Activated CD4-positive, alpha-beta memory T cell treated with anti-CD3 and anti-CD28 coated beads, Interleukin-2, amount 10 ng/mL, durations not matched to agents 7 days and 5 days (primary cell): ENCODE measurements at regions of chr9 and their contacts with region 1.

Region 1: GRCh38 chr9:111691672-111692329 is 30.4 kb downstream of the GNG10 start:
- DNase-seq: no peak
- H3K4me3 Mint-ChIP-seq: no peak overlapping the region
- H3K27ac Mint-ChIP-seq: no peak overlapping the region
- H3K4me1 Mint-ChIP-seq: no peaks in the 10 kb centered on the region
- H3K27me3 Mint-ChIP-seq: no peaks in the 10 kb centered on the region

Region 2: DNA sequence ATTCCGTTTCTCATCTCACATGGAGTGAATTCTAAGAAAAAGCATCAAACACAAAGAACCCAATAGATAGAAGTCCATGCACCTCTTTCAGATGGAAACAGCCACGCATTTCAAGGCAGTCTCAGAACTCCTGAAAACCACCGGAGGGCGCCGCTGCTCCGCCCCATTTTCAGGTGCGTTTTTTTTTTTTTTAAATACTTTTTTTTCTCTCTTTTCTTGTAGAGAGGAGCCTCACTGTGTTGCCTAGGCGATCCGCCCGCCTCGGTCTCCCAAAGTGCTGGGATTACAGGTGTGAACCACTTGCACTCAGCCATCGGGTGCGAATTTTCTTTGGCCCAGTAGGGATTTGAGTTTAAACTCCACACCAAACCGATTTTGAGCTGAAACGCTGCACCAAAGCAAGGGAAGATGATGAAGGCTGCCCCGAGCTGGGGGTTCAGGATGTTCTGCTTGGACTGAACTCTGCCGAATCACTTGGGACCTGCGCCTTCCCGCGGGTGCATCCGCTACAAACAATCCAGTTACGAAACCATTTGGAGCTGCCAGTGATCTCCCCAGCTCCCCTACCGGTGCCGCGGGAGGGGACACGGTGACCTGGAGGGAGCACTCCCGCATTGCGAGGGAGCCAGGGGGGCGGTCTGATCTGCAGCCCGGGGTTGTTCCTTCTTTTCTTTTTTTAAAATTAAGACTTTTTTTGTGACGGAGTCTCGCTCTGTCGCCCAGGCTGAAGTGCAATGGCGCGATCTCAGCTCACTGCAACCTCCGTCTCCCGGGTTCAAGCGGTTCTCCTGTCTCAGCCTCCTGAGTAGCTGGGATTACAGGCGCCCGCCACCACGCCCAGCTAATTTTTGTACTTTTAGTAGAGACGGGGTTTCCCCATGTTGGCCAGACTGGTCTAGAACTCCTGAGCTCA is 93.7 kb before region 1 on chr9:
- CTCF ChIA-PET with region 1: interaction called, 19 read pairs
- POLR2A ChIA-PET with region 1: no interaction called
- DNase-seq: peak; percentile 69
- H3K4me3 Mint-ChIP-seq: peak overlapping the region; percentile 75
- H3K27ac Mint-ChIP-seq: no peak overlapping the region
- H3K4me1 Mint-ChIP-seq: peaks cover 25% of the 10 kb centered on the region
- H3K27me3 Mint-ChIP-seq: peaks cover 32% of the 10 kb centered on the region

Region 3: DNA sequence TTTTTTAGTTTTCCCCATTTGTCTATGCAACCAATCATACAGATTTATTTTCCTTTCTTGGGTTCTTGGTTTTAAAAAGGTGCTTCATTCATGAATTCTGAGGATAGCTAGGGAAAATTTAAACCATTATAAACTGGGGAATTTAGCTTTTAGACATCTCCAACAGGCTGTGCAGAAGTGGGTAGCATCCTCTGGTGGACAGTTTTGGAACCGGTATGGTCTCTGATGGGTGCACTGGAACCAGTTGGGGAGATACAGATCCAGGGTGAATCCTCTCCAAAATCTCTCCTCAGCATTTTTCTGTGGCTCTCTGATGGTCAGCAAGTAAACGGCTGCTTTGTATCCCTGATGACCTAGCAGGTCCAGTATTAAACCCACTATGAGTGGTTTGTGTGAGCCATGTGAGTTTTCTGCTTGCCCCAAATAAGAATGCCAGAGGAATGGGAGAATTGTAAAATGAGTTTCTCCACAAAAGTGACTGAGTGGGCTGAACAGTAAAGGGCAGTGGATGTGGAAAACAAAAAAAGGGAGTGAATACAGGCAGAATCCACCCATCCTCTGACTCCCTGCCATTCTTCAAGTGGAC is 69.8 kb before region 1 on chr9:
- CTCF ChIA-PET with region 1: interaction called, 11 read pairs
- POLR2A ChIA-PET with region 1: no interaction called
- DNase-seq: no peak
- H3K4me3 Mint-ChIP-seq: no peak overlapping the region
- H3K27ac Mint-ChIP-seq: no peak overlapping the region
- H3K4me1 Mint-ChIP-seq: no peaks in the 10 kb centered on the region
- H3K27me3 Mint-ChIP-seq: peaks cover 12% of the 10 kb centered on the region

Region 4: GRCh38 chr9:111633389-111633736 is 58.4 kb before region 1 on chr9:
- CTCF ChIA-PET with region 1: no interaction called
- POLR2A ChIA-PET with region 1: no interaction called
- DNase-seq: no peak
- H3K4me3 Mint-ChIP-seq: peak overlapping the region; percentile 15
- H3K27ac Mint-ChIP-seq: no peak overlapping the region
- H3K4me1 Mint-ChIP-seq: peaks cover 38% of the 10 kb centered on the region
- H3K27me3 Mint-ChIP-seq: no peaks in the 10 kb centered on the region